Kidney (tissue), 22 donors: ENCODE measurements at regions of chr17 and their contacts with region 1.

Region 1: DNA sequence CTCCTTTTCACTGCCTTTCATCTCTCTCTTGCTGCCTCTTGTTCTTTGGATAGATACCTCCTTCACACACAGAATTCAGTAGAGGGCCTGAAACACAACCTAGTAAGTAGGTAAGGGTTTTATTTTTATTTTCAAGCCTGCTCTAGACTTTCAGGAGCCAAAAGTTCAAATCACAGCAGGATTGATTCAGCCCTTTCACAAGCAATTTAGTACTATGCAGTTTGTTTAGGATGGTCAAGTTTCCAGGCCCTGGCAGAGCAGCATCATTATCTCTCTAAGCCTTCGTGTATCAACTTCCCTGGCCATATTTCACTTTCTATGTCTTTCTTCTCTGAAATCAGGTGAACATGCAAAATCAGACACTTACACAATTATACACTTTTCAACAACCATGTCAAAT is 148.8 kb upstream of the CORO6 start:
- DNase-seq: peak in 3 of 5 donors; percentile 14 to 69 (median 54)
- H3K4me3 ChIP-seq: no peak overlapping the region
- H3K27ac ChIP-seq: no peak overlapping the region
- H3K4me1 ChIP-seq: no peaks in the 10 kb centered on the region
- H3K27me3 ChIP-seq: no peaks in the 10 kb centered on the region
- CTCF ChIP-seq: no peak

Region 2: DNA sequence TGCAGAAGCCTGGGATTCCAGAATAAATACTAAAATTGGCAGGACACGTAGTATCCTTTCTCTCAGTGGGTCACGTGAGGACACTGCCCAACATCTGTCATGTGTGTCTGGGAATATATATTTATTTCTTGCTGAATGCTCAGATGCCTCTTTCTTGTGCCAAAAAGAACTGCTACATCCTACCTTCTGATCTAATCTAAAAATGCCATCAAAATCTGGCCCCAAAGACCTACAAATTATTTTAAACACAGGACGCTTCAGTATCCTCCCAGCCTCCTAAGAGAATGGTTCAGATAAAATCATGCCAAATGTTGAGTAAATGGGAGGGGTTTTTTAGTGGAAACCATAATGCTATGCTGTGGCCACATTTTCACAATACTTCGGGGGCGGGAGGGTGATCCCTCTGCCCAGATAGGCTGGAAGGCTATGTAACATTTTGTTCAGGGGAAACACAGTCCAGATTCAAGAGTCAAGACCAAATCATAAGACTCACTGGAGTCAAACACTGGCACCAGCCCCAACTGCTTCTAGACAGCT is 126.0 kb before region 1 on chr17:
- intact Hi-C with region 1: loop called (anchors 10 kb)
- DNase-seq: peak in 2 of 5 donors; percentile 34 to 83
- H3K4me3 ChIP-seq: no peak overlapping the region
- H3K27ac ChIP-seq: peak overlapping the region in 1 of 2 donors; percentile 8
- H3K4me1 ChIP-seq: peaks cover 9 to 23% (median 12%) of the 10 kb centered on the region in 3 donors
- H3K27me3 ChIP-seq: no peaks in the 10 kb centered on the region
- CTCF ChIP-seq: no peak

Region 3: DNA sequence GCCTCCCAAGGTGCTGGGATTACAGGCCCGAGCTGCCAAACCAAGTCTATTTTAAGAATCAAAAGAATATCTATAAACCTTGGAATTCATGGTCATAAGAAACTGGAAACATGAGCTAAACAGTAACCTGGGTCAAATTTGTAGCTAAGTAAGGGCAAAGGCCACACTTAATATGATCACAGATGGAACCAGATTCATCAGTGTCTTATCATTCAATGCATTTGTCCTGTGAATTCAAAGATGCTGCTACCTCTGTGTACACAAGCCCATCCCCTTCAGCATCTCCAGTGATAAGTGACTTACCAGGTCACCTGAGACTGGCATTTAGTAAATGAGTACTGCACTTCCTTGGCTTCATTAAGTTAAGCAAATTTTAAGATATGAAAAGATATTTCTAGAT is 50.3 kb after region 1 on chr17:
- intact Hi-C with region 1: no loop called
- DNase-seq: no peak
- H3K4me3 ChIP-seq: no peak overlapping the region
- H3K27ac ChIP-seq: no peak overlapping the region
- H3K4me1 ChIP-seq: no peaks in the 10 kb centered on the region
- H3K27me3 ChIP-seq: no peaks in the 10 kb centered on the region
- CTCF ChIP-seq: no peak